Esophagus squamous epithelium (tissue), 5 donors: ENCODE measurements at regions of chr3 and their contacts with region 1.

Region 1: DNA sequence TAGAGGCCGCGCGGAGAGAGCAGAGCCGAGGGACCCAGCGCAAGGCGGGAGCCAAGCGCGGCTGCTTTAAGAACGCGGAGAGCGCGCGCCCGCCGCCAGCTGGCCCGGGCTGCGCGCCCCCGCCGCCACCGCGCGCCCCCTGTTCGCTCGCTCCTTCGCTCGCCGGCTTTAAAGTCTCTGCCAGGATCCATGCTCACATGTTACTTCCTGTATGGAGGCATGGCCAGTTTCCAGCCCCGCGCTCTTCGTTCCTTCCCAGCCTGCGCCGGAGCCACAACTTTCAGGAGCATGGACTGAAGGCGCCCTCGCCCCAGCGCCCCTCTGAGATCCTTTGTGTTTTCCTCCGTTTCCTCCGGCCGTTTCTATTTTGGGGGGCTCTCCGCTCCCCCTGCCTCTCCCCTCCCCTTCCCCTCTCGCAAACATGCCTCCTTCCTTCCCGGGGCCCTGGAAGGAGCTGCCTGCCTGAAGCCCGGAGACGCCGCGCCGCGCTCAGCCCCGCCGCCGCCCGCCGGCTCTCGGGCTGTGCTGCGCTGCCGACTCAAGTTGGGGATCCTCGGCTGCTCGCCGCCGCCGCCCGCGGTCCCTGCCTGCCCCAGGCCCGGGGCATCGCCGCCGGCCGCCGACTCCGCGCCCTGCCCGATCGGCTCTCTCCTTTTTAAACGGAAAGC is at the start of gene PTPRG:
- DNase-seq: peak; percentile 4
- H3K4me3 ChIP-seq: peak within 1 kb of the TSS; percentile 68 to 81 (median 74)
- H3K27ac ChIP-seq: peak within 1 kb of the TSS; percentile 82 to 95 (median 94)
- H3K4me1 ChIP-seq: peaks cover 4 to 58% (median 12%) of the 10 kb centered on the region in 3 donors
- H3K27me3 ChIP-seq: peaks cover 0 to 79% (median 0%) of the 10 kb centered on the region in 4 donors
- CTCF ChIP-seq: no peak
- POLR2A ChIP-seq: peak in 2 of 4 donors; percentile 62 to 73
- total RNA-seq, gene PTPRG: 3.7 to 42.2 (median 15.2) TPM

Region 2: GRCh38 chr3:61438253-61439121 is 123.0 kb before region 1 on chr3:
- intact Hi-C with region 1: no loop called
- DNase-seq: no peak
- H3K4me3 ChIP-seq: no peak overlapping the region
- H3K27ac ChIP-seq: no peak overlapping the region
- H3K4me1 ChIP-seq: no peaks in the 10 kb centered on the region
- H3K27me3 ChIP-seq: no peaks in the 10 kb centered on the region
- CTCF ChIP-seq: no peak
- POLR2A ChIP-seq: no peak

Region 3: GRCh38 chr3:61530355-61530754 is 31.2 kb before region 1 on chr3:
- intact Hi-C with region 1: no loop called
- DNase-seq: no peak
- H3K4me3 ChIP-seq: no peak overlapping the region
- H3K27ac ChIP-seq: no peak overlapping the region
- H3K4me1 ChIP-seq: no peaks in the 10 kb centered on the region
- H3K27me3 ChIP-seq: no peaks in the 10 kb centered on the region
- CTCF ChIP-seq: peak in 4 of 6 experiments; percentile 30 to 46 (median 42)
- POLR2A ChIP-seq: no peak

Region 4: DNA sequence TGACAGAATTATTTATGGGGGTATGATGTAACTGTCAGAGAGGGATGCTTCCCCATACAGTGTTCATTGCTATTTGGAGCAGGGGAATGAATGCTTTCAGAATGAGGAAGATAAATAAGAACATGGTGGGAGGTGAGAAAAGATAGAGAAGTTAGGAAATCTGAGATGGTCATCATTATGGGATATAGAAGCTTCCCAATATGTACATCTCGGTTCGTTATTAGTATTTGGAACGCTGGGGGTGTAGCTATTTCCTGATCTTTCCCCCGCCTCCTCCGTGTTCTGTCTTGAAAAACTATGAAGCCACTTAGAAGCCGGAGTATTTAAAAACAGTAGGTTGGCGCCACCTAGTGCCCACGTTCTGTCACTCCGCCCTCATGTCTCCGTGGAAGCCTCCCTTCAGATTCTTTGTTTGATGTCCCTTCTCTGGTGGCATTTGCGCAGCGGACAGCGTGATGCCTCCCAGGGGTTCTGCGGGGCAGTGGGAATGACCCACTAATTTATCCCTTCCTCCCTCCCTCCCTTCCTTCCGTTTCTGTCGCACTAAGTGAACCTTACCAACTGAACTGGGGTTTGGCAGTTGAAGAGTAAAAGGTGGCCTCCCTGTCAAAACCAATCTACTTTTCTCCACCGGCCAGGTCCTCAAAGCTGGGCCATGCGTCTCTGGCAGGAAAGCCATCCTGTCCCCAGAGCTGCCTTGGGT is 627.3 kb after region 1 on chr3:
- intact Hi-C with region 1: loop called (anchors 10 kb)
- DNase-seq: no peak
- H3K4me3 ChIP-seq: peak overlapping the region in 1 of 4 donors; percentile 39
- H3K27ac ChIP-seq: no peak overlapping the region
- H3K4me1 ChIP-seq: peaks cover 0 to 16% (median 2%) of the 10 kb centered on the region in 3 donors
- H3K27me3 ChIP-seq: no peaks in the 10 kb centered on the region
- CTCF ChIP-seq: peak; percentile 47 to 80 (median 76)
- POLR2A ChIP-seq: no peak